ENCODE measurements at regions of chr6 and their contacts with region 1.

Region 1: GRCh38 chr6:31862344-31863227 is at the start of gene NEU1:
- DNase-seq: peak; percentile 99 to 100 (median 99)
- H3K4me3 ChIP-seq: peak within 1 kb of the TSS; percentile 87
- H3K4me3 Mint-ChIP-seq: peak within 1 kb of the TSS; percentile 80 to 97 (median 93)
- H3K27ac ChIP-seq: peak within 1 kb of the TSS; percentile 95
- H3K27ac Mint-ChIP-seq: peak within 1 kb of the TSS; percentile 82 to 97 (median 94)
- H3K4me1 ChIP-seq: peaks cover 21% of the 10 kb centered on the region
- H3K4me1 Mint-ChIP-seq: peaks cover 25 to 26% (median 26%) of the 10 kb centered on the region in 3 donors
- H3K27me3 ChIP-seq: no peaks in the 10 kb centered on the region
- H3K27me3 Mint-ChIP-seq: peaks cover 0 to 4% of the 10 kb centered on the region in 2 donors
- total RNA-seq, gene NEU1: 19.0 to 19.4 TPM

Region 2: DNA sequence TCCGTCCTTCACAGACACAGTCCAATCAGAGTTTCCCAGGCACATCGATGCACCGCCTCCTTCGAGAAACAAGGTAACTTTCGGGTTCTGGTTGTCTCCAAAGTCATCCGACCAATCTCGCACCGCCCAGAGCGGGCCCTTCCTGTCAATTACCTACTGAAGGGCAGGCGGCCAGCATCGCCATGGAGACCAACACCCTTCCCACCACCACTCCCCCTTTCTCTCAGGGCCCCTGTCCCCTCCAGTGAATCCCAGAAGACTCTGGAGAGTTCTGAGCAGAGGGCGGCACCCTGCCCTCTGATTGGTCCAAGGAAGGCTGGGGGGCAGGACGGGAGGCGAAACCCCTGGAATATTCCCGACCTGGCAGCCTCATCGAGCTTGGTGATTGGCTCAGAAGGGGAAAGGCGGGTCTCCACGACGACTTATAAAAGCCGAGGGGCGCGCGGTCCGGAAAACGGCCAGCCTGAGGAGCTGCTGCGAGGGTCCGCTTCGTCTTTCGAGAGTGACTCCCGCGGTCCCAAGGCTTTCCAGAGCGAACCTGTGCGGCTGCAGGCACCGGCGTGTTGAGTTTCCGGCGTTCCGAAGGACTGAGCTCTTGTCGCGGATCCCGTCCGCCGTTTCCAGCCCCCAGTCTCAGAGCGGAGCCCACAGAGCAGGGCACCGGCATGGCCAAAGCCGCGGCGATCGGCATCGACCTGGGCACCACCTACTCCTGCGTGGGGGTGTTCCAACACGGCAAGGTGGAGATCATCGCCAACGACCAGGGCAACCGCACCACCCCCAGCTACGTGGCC is 35.1 kb before region 1 on chr6 and contains the start of gene HSPA1B:
- CTCF ChIA-PET with region 1: interaction called, 10 read pairs
- POLR2A ChIA-PET with region 1: interaction called, 4 read pairs
- DNase-seq: peak; percentile 69 to 92 (median 81)
- H3K4me3 ChIP-seq: peak within 1 kb of the TSS; percentile 71
- H3K4me3 Mint-ChIP-seq: peak within 1 kb of the TSS; percentile 87 to 99 (median 96)
- H3K27ac ChIP-seq: peak within 1 kb of the TSS; percentile 89
- H3K27ac Mint-ChIP-seq: peak within 1 kb of the TSS; percentile 94 to 99 (median 96)
- H3K4me1 ChIP-seq: peaks cover 27% of the 10 kb centered on the region
- H3K4me1 Mint-ChIP-seq: peaks cover 41 to 54% (median 43%) of the 10 kb centered on the region in 3 donors
- H3K27me3 ChIP-seq: no peaks in the 10 kb centered on the region
- H3K27me3 Mint-ChIP-seq: peaks cover 0 to 4% of the 10 kb centered on the region in 2 donors
- total RNA-seq, gene HSPA1B: 80.9 to 81.4 TPM

Region 3: GRCh38 chr6:31834434-31835198 is 28.0 kb before region 1 on chr6:
- CTCF ChIA-PET with region 1: interaction called, 10 read pairs
- POLR2A ChIA-PET with region 1: interaction called, 12 read pairs
- DNase-seq: peak; percentile 64 to 86 (median 75)
- H3K4me3 ChIP-seq: peak overlapping the region; percentile 73
- H3K4me3 Mint-ChIP-seq: peak overlapping the region; percentile 89 to 100 (median 95)
- H3K27ac ChIP-seq: peak overlapping the region; percentile 94
- H3K27ac Mint-ChIP-seq: peak overlapping the region; percentile 94 to 100 (median 98)
- H3K4me1 ChIP-seq: peaks cover 54% of the 10 kb centered on the region
- H3K4me1 Mint-ChIP-seq: peaks cover 54 to 65% (median 59%) of the 10 kb centered on the region in 3 donors
- H3K27me3 ChIP-seq: no peaks in the 10 kb centered on the region
- H3K27me3 Mint-ChIP-seq: no peaks in the 10 kb centered on the region

Region 4: GRCh38 chr6:31897612-31898382 is 35.2 kb after region 1 on chr6 and contains the start of gene EHMT2:
- CTCF ChIA-PET with region 1: interaction called, 3 read pairs
- POLR2A ChIA-PET with region 1: interaction called, 13 read pairs
- DNase-seq: peak; percentile 79 to 89 (median 81)
- H3K4me3 ChIP-seq: peak within 1 kb of the TSS; percentile 94
- H3K4me3 Mint-ChIP-seq: peak within 1 kb of the TSS; percentile 91 to 99 (median 97)
- H3K27ac ChIP-seq: peak within 1 kb of the TSS; percentile 82
- H3K27ac Mint-ChIP-seq: peak within 1 kb of the TSS; percentile 92 to 98 (median 96)
- H3K4me1 ChIP-seq: peaks cover 39% of the 10 kb centered on the region
- H3K4me1 Mint-ChIP-seq: peaks cover 27 to 48% (median 39%) of the 10 kb centered on the region in 3 donors
- H3K27me3 ChIP-seq: no peaks in the 10 kb centered on the region
- H3K27me3 Mint-ChIP-seq: no peaks in the 10 kb centered on the region
- total RNA-seq, gene EHMT2: 71.6 to 72.4 TPM